ENCODE measurements at regions of chr19 and their contacts with region 1.

Region 1: DNA sequence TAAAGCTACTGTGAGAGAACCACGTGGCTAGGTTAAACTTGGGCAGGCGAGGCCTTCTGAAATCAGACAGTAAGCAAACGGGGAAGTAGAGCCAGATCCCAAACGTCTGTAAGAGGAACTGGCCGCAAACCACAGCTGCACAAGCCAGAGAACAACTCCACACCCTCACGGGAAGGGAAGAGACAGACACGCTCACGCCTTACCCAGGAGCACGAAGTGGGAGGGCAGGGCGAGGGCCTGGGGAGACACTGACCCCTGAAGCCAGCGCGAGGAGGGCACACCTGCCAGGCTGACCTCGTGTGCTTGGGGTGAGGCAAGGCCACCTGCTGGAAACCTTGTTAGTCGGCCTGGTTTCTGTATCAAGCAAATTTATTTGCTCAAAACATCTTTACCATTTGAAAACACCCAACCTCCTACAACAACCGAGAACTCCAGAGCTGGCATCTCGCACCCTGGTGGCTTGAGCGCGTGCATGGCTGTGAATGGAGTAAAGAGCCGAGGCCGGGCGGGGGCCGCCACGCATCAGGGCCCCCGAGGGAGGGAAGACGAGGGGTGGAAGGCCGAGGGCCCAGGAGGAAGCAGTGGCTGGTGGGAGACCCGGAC is 7.3 kb downstream of the POLR2E start:
- DNase-seq: no peak
- H3K4me3 ChIP-seq: no peak overlapping the region
- H3K27ac ChIP-seq: no peak overlapping the region
- H3K4me1 ChIP-seq: no peaks in the 10 kb centered on the region; a peak in 1 of 7 replicates
- H3K27me3 ChIP-seq: no peaks in the 10 kb centered on the region; a peak in 1 of 7 replicates
- CTCF ChIP-seq: no peak
- EP300 ChIP-seq: no peak
- POLR2A ChIP-seq: no peak
- RAD21 ChIP-seq: no peak

Region 2: DNA sequence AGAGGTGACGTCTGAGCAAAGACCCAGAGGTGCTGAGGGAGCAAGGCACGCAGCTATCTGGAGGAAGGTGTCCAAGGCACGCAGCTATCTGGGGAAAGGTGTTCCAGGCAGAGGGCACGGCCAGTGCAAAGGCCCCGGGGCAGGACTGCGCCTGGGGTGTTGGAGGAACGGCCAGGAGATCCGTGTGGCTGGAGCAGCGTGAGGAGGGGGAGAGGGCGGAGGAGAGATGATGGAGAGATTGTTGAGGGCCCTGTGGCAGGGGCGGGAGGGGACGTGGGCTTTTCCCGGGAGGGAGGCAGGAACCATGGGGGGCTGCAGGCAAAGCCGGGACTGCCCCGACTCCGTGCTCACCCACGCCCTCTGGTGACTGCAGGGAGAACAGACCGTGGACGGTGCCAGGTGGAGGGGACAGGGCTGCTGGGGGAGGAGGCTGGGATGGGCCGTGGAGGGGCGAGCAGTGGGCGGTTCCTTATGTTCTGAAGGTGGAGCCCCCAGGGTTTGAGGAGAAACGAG is 350.3 kb before region 1 on chr19:
- CTCF ChIA-PET with region 1: no interaction called
- POLR2A ChIA-PET with region 1: no interaction called
- DNase-seq: peak; percentile 43 to 95
- H3K4me3 ChIP-seq: no peak overlapping the region
- H3K27ac ChIP-seq: no peak overlapping the region
- H3K4me1 ChIP-seq: no peaks in the 10 kb centered on the region
- H3K27me3 ChIP-seq: no peaks in the 10 kb centered on the region
- CTCF ChIP-seq: peak; percentile 74 to 96 (median 79)
- EP300 ChIP-seq: peak in 1 of 2 experiments; percentile 9; a peak in 1 of 3 replicates
- POLR2A ChIP-seq: no peak
- RAD21 ChIP-seq: peak; percentile 36 to 53

Region 3: GRCh38 chr19:1074544-1075283 is 13.2 kb before region 1 on chr19:
- CTCF ChIA-PET with region 1: interaction called, 7 read pairs
- POLR2A ChIA-PET with region 1: interaction called, 93 read pairs
- DNase-seq: no peak
- H3K4me3 ChIP-seq: no peak overlapping the region
- H3K27ac ChIP-seq: no peak overlapping the region
- H3K4me1 ChIP-seq: peaks cover 0 to 4% (median 1%) of the 10 kb centered on the region in 4 experiments; a peak in 2 of 7 replicates
- H3K27me3 ChIP-seq: peaks cover 0 to 4% (median 2%) of the 10 kb centered on the region in 4 experiments; a peak in 2 of 7 replicates
- CTCF ChIP-seq: no peak
- EP300 ChIP-seq: no peak
- POLR2A ChIP-seq: no peak
- RAD21 ChIP-seq: no peak

Region 4: DNA sequence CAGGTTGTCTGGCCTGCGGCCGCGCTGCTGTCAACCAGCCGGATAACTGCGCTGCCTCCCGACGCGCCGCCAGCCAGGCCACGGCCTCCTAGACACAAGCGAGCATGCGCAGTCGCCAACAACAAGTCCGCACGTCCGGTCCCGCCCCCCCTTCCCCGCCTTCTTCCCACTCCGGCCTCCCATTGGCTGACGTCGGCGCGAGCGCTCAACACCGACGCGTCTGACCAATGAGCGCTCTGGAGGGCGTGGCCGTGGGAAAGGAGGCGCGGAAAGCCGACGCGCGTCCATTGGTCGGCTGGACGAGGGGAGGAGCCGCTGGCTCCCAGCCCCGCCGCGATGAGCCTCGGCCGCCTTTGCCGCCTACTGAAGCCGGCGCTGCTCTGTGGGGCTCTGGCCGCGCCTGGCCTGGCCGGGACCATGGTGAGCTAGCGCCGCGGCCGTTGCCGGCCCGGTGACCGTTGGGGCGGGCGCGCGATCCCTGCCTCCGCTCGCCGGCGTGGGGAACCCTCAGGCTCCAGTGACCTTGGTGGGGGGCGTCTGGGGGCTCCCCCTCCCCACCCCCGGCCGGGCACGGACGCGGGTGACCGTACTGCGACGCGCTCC is 15.9 kb after region 1 on chr19 and contains the start of gene GPX4:
- CTCF ChIA-PET with region 1: interaction called, 6 read pairs
- POLR2A ChIA-PET with region 1: interaction called, 116 read pairs
- DNase-seq: peak; percentile 95 to 98
- H3K4me3 ChIP-seq: peak within 1 kb of the TSS; percentile 57 to 93 (median 64)
- H3K27ac ChIP-seq: peak within 1 kb of the TSS; percentile 66; the same call in 1 of the 2 replicates
- H3K4me1 ChIP-seq: peaks cover 4 to 21% (median 8%) of the 10 kb centered on the region in 4 experiments
- H3K27me3 ChIP-seq: no peaks in the 10 kb centered on the region
- CTCF ChIP-seq: no peak
- EP300 ChIP-seq: no peak
- POLR2A ChIP-seq: peak; percentile 95 to 96
- RAD21 ChIP-seq: no peak
- total RNA-seq, gene GPX4: 342 and 355 TPM in 2 replicates

Region 5: GRCh38 chr19:1213391-1214286 is 125.7 kb after region 1 on chr19:
- CTCF ChIA-PET with region 1: interaction called, 10 read pairs
- POLR2A ChIA-PET with region 1: interaction called, 3 read pairs
- DNase-seq: no peak
- H3K4me3 ChIP-seq: no peak overlapping the region
- H3K27ac ChIP-seq: peak overlapping the region; percentile 50
- H3K4me1 ChIP-seq: peaks cover 0 to 13% (median 7%) of the 10 kb centered on the region in 4 experiments; a peak in 4 of 7 replicates
- H3K27me3 ChIP-seq: no peaks in the 10 kb centered on the region
- CTCF ChIP-seq: no peak
- EP300 ChIP-seq: no peak
- POLR2A ChIP-seq: no peak
- RAD21 ChIP-seq: no peak

Measured in H1 (cell line).